Activated T-helper 1 cell treated with anti-CD3 and anti-CD28 coated beads, Interleukin-12 subunit alpha, Interleukin-12 subunit beta, Interleukin-2, Interleukin-4 antibody, amounts not matched to agents 30 ng/mL and 10 ng/mL and 1 ng/mL, durations not matched to agents 14 hours and 24 hours and 36 hours (primary cell): ENCODE measurements at regions of chr6 and their contacts with region 1.

Region 1: GRCh38 chr6:116695401-116695800 is 14.4 kb downstream of the KPNA5 start:
- DNase-seq: no peak
- H3K4me3 Mint-ChIP-seq: no peak overlapping the region
- H3K27ac Mint-ChIP-seq: no peak overlapping the region
- H3K4me1 Mint-ChIP-seq: peaks cover 27% of the 10 kb centered on the region
- H3K27me3 Mint-ChIP-seq: no peaks in the 10 kb centered on the region

Region 2: DNA sequence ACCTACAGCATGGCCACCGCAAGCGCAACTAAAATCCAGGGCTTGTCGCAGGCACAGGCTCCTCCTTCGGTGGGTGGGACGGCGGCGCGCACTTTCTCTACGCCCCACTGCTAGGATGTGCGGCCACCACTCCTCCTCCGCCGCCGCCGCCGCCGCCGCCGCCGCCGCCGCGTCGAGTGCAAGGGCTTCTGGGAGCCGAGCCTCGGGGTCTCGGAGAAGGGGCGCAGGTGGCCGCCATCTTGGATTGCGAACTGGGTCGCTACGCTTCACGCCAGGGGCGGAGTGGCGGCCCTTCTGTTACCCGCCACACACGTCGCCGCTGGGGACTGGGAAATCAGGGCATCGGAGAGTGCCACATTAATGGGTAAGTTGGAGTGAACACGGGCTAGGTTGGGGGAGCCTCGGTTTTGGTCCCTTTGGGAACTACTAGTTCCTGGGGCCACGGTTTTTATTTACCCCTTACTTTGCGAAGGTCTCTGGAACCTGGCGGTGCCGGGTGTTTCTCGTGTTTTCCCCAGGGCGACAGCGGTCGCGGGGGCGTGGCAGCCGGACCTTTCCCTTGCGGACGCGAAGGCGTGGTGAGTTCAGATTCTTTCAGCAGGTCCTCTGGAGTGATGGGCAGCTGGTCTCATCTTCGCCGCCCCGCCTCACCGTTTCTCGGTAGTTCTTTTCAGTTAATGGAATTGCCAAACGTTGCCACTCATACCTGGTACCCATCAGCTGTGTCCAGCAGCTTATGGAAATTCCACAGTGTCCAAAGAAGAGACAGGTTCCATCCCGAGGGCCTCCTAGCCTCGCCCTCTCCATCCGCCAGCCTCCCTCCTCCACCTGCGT is 14.2 kb before region 1 on chr6 and contains the start of gene KPNA5:
- intact Hi-C with region 1: loop called (anchors 1 kb)
- DNase-seq: peak; percentile 84
- H3K4me3 Mint-ChIP-seq: peak within 1 kb of the TSS; percentile 97
- H3K27ac Mint-ChIP-seq: peak within 1 kb of the TSS; percentile 97
- H3K4me1 Mint-ChIP-seq: peaks cover 25% of the 10 kb centered on the region
- H3K27me3 Mint-ChIP-seq: no peaks in the 10 kb centered on the region
- total RNA-seq, gene KPNA5: 6.1 and 7.6 TPM in 2 replicates